ENCODE measurements at regions of chr2 and their contacts with region 1.

Region 1: GRCh38 chr2:74440378-74441169 is 1.2 kb downstream of the RTKN start:
- DNase-seq: peak; percentile 93 to 95
- H3K4me3 ChIP-seq: peak overlapping the region; percentile 94
- H3K4me3 Mint-ChIP-seq: peak overlapping the region; percentile 97
- H3K27ac Mint-ChIP-seq: peak overlapping the region; percentile 99
- H3K4me1 ChIP-seq: peaks cover 20% of the 10 kb centered on the region; the same call in 1 of the 2 replicates
- H3K4me1 Mint-ChIP-seq: peaks cover 13% of the 10 kb centered on the region
- H3K27me3 ChIP-seq: no peaks in the 10 kb centered on the region
- H3K27me3 Mint-ChIP-seq: no peaks in the 10 kb centered on the region
- CTCF ChIP-seq: peak in 1 of 2 experiments; percentile 28

Region 2: DNA sequence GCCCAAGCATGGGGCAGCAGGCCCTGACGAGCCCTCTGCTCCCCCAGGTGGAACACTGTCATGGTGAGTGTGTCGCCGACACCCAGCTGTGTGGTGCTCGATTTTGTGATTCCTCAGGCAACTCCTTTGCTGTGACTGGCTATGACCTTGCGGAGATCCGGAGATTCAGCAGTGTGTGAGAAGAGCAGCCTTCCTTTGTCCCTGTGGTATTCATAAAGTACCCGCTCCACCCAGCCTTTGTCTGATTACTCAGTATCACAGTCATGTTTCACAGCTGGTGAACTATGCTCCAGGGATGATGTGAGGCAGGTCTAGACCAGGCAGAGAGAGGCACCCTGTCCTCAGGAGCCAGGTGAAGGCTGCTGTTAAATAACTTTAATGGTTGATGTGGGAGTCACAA is 15.1 kb before region 1 on chr2:
- CTCF ChIA-PET with region 1: no interaction called
- POLR2A ChIA-PET with region 1: interaction called, 7 read pairs
- intact Hi-C with region 1: loop called (anchors 2 kb)
- DNase-seq: no peak
- H3K4me3 ChIP-seq: no peak overlapping the region
- H3K4me3 Mint-ChIP-seq: no peak overlapping the region
- H3K27ac Mint-ChIP-seq: no peak overlapping the region
- H3K4me1 ChIP-seq: no peaks in the 10 kb centered on the region
- H3K4me1 Mint-ChIP-seq: peaks cover 14% of the 10 kb centered on the region
- H3K27me3 ChIP-seq: no peaks in the 10 kb centered on the region
- H3K27me3 Mint-ChIP-seq: peaks cover 2% of the 10 kb centered on the region
- CTCF ChIP-seq: no peak

Region 3: GRCh38 chr2:74472086-74472944 is 31.7 kb after region 1 on chr2 and contains the start of gene MRPL53:
- CTCF ChIA-PET with region 1: no interaction called
- POLR2A ChIA-PET with region 1: interaction called, 10 read pairs
- intact Hi-C with region 1: no loop called
- DNase-seq: peak; percentile 97
- H3K4me3 ChIP-seq: peak within 1 kb of the TSS; percentile 65
- H3K4me3 Mint-ChIP-seq: peak within 1 kb of the TSS; percentile 93
- H3K27ac Mint-ChIP-seq: peak within 1 kb of the TSS; percentile 95
- H3K4me1 ChIP-seq: peaks cover 4% of the 10 kb centered on the region; the same call in 1 of the 2 replicates
- H3K4me1 Mint-ChIP-seq: peaks cover 8% of the 10 kb centered on the region
- H3K27me3 ChIP-seq: no peaks in the 10 kb centered on the region
- H3K27me3 Mint-ChIP-seq: no peaks in the 10 kb centered on the region
- CTCF ChIP-seq: no peak
- total RNA-seq, gene MRPL53: 88.4 and 102 TPM in 2 replicates

Region 4: DNA sequence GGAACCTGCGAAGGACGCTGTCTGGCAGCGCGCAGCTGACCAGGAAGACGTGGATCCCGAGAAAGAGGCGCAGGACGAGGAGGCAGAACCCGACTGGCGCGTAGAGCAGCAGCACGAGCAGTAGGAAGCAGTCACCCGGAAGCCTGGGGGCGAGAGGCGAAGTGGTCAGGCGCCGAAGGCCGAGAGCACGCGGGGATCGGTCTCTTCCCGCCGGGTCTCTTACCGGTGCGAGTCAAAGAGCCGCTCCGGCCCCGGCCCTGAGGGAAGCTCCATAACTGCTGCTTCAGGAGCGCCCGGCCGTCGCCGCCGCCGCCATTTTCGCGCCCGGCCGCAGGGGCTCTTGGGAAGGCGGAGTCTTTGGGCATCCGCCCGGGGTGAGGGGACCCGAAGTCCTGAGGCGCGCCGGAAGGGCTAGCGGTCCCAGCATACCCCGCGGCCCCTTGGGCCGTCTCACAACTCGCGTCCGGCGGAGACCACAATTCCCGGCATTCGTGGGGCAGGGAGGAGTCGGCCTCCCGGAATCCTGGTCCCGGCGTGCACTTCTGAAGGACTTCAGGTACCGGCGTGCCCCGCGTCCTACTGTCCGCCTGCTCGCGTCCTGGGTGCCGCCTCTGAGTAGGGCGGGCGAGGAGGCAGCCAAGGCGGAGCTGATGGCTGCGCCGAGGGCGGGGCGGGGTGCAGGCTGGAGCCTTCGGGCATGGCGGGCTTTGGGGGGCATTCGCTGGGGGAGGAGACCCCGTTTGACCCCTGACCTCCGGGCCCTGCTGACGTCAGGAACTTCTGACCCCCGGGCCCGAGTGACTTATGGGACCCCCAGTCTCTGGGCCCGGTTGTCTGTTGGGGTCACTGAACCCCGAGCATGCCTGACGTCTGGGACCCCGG is 89.0 kb after region 1 on chr2 and contains the starts of genes AUP1 and HTRA2:
- CTCF ChIA-PET with region 1: no interaction called
- POLR2A ChIA-PET with region 1: no interaction called
- intact Hi-C with region 1: no loop called
- DNase-seq: peak; percentile 99
- H3K4me3 ChIP-seq: peak within 1 kb of the TSS; percentile 78
- H3K4me3 Mint-ChIP-seq: peak within 1 kb of the TSS; percentile 99
- H3K27ac Mint-ChIP-seq: peak within 1 kb of the TSS; percentile 99
- H3K4me1 ChIP-seq: peaks cover 6% of the 10 kb centered on the region
- H3K4me1 Mint-ChIP-seq: peaks cover 18% of the 10 kb centered on the region
- H3K27me3 ChIP-seq: no peaks in the 10 kb centered on the region
- H3K27me3 Mint-ChIP-seq: no peaks in the 10 kb centered on the region
- CTCF ChIP-seq: no peak
- total RNA-seq, gene AUP1: 154 and 156 TPM in 2 replicates
- total RNA-seq, gene HTRA2: 27.0 and 27.3 TPM in 2 replicates

Measured in Caco-2 (cell line).